ENCODE measurements at regions of chr4 and their contacts with region 1.

Region 1: GRCh38 chr4:155953151-155954114 is at the start of gene CTSO:
- DNase-seq: peak; percentile 68
- H3K4me3 ChIP-seq: peak within 1 kb of the TSS; percentile 86 to 92
- H3K27ac ChIP-seq: peak within 1 kb of the TSS; percentile 99
- H3K4me1 ChIP-seq: no peaks in the 10 kb centered on the region
- H3K27me3 ChIP-seq: no peaks in the 10 kb centered on the region
- CTCF ChIP-seq: peak; percentile 37 to 67 (median 57)
- POLR2A ChIP-seq: peak; percentile 34
- total RNA-seq, gene CTSO: 24.9 to 37.5 TPM

Region 2: GRCh38 chr4:155403886-155404285 is 549.5 kb before region 1 on chr4:
- intact Hi-C with region 1: loop called (anchors 2 kb)
- DNase-seq: no peak
- H3K4me3 ChIP-seq: no peak overlapping the region
- H3K27ac ChIP-seq: no peak overlapping the region
- H3K4me1 ChIP-seq: peaks cover 4% of the 10 kb centered on the region
- H3K27me3 ChIP-seq: no peaks in the 10 kb centered on the region
- CTCF ChIP-seq: peak in 3 of 4 experiments; percentile 27 to 74 (median 52)
- POLR2A ChIP-seq: no peak

Region 3: GRCh38 chr4:155512817-155513216 is 440.6 kb before region 1 on chr4:
- intact Hi-C with region 1: no loop called
- DNase-seq: no peak
- H3K4me3 ChIP-seq: no peak overlapping the region
- H3K27ac ChIP-seq: no peak overlapping the region
- H3K4me1 ChIP-seq: no peaks in the 10 kb centered on the region
- H3K27me3 ChIP-seq: no peaks in the 10 kb centered on the region
- CTCF ChIP-seq: no peak
- POLR2A ChIP-seq: no peak

Region 4: GRCh38 chr4:155693015-155693663 is 260.3 kb before region 1 on chr4:
- intact Hi-C with region 1: loop called (anchors 10 kb)
- DNase-seq: peak; percentile 76
- H3K4me3 ChIP-seq: no peak overlapping the region
- H3K27ac ChIP-seq: peak overlapping the region; percentile 24 to 65
- H3K4me1 ChIP-seq: peaks cover 16% of the 10 kb centered on the region
- H3K27me3 ChIP-seq: no peaks in the 10 kb centered on the region
- CTCF ChIP-seq: no peak
- POLR2A ChIP-seq: no peak

Region 5: DNA sequence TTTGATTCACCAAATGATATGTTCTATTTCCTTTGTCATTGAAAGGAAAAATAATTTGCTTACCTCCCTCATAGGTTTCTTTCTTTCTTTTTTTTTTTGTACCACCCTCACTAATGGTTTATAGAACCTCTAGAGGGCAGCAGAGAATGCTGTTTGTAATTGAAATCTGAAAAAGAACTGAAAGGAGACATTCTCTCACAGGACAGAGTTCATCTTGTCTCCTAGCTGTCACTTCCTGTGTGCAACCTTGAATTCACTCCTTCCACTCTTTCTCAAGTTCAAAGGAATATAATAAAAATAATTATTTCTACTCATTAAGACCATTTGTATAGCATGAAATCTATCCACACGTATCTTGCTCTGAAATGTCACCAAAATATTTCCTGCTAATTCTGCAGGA is 143.6 kb before region 1 on chr4:
- intact Hi-C with region 1: loop called (anchors 2 kb)
- DNase-seq: no peak
- H3K4me3 ChIP-seq: no peak overlapping the region
- H3K27ac ChIP-seq: no peak overlapping the region
- H3K4me1 ChIP-seq: no peaks in the 10 kb centered on the region
- H3K27me3 ChIP-seq: no peaks in the 10 kb centered on the region
- CTCF ChIP-seq: peak; percentile 30 to 66 (median 54)
- POLR2A ChIP-seq: no peak